ENCODE measurements at regions of chr2 and their contacts with region 1.

Region 1: DNA sequence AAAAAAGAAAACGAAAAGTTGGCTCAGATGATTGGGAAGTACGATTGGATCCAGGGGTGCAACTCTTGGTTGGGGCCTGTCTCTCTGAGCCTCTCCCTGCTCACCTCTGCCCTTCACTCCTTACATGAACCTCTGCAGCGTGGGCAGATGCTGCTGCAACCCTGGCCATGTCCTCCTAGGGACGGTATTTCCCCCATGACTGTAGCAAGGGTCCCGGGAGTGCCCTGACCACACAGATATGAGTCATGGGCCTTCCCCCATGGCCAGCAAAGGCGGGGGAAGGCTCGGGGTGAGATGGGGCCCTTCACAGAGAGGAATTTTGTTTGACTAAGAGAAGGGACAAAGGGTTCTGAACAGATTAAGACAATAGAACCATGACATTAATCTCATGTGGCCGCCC is 129.0 kb downstream of the NCK2 start:
- DNase-seq: peak; percentile 53
- ATAC-seq: peak; percentile 93
- H3K4me3 Mint-ChIP-seq: peak overlapping the region; percentile 59
- H3K27ac Mint-ChIP-seq: peak overlapping the region; percentile 75
- H3K4me1 Mint-ChIP-seq: peaks cover 92% of the 10 kb centered on the region
- H3K27me3 Mint-ChIP-seq: no peaks in the 10 kb centered on the region
- CTCF ChIP-seq: no peak

Region 2: DNA sequence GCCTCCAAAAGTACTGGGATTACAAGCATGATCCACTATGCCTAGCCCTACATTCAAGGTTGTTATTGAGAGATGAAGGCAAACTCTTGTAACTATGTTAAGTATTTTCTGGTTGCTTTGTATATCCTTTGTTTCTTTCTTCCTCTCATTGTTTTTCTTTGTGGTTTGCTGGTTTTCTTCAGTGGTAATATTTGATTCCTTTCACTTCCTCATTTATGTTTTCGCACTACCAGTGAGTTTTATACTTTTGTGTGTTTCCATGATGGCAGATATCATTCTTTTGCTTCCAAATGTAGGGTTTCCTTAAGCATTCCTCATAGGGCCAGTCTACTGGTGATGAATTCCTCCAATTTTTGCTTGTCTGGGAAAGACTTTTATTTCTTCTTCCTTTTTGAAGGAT is 38.8 kb before region 1 on chr2:
- CTCF ChIA-PET with region 1: no interaction called
- POLR2A ChIA-PET with region 1: no interaction called
- intact Hi-C with region 1: loop called (anchors 2 kb)
- DNase-seq: no peak
- ATAC-seq: peak; percentile 72
- H3K4me3 Mint-ChIP-seq: peak overlapping the region; percentile 56
- H3K27ac Mint-ChIP-seq: peak overlapping the region; percentile 82
- H3K4me1 Mint-ChIP-seq: peaks cover 75% of the 10 kb centered on the region
- H3K27me3 Mint-ChIP-seq: no peaks in the 10 kb centered on the region
- CTCF ChIP-seq: no peak

Region 3: GRCh38 chr2:105857076-105857740 is 16.5 kb before region 1 on chr2:
- CTCF ChIA-PET with region 1: no interaction called
- POLR2A ChIA-PET with region 1: no interaction called
- intact Hi-C with region 1: no loop called
- DNase-seq: no peak
- ATAC-seq: no peak
- H3K4me3 Mint-ChIP-seq: no peak overlapping the region
- H3K27ac Mint-ChIP-seq: no peak overlapping the region
- H3K4me1 Mint-ChIP-seq: peaks cover 73% of the 10 kb centered on the region
- H3K27me3 Mint-ChIP-seq: no peaks in the 10 kb centered on the region
- CTCF ChIP-seq: no peak

Region 4: DNA sequence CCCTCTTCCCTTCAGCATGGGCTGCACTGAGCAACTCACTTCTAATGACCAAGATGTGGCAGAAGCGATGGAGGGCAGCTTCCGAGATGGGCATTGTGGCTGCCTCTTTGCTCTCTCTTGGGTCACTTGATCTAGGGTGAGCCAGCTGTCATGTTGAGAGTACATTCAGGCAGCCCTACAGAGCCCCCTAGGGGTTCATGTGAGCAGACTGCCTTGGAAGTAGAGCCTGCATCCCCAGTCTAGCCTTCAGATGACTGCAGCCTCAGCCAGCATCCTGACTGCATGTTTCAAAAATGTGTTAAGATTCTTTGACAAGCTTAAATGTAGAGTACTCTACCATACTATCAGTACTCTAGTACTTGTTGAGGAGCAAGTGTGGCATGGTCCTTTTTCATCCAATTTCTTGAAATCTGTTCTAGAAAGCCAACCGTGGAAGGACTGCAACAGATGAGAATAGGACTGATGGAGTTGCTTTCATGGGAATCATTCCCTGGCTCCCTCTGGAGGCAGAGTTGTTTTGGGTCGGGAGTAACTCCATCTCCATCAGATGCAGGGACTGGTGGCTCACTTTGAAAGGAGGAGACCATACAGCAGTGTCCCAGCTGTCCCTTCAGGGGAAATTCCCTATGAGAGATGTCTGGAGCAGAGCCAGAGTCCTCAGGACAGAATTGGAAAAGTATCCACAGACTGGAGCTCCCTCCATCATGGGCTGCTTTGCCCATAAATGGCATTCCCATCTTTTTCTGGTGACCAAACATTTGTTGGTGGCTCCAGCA is 15.1 kb after region 1 on chr2:
- CTCF ChIA-PET with region 1: no interaction called
- POLR2A ChIA-PET with region 1: interaction called, 4 read pairs
- intact Hi-C with region 1: loop called (anchors 1 kb)
- DNase-seq: no peak
- ATAC-seq: no peak
- H3K4me3 Mint-ChIP-seq: no peak overlapping the region
- H3K27ac Mint-ChIP-seq: no peak overlapping the region
- H3K4me1 Mint-ChIP-seq: peaks cover 49% of the 10 kb centered on the region
- H3K27me3 Mint-ChIP-seq: no peaks in the 10 kb centered on the region
- CTCF ChIP-seq: no peak

Region 5: GRCh38 chr2:105904938-105905337 is 31.2 kb after region 1 on chr2:
- CTCF ChIA-PET with region 1: no interaction called
- POLR2A ChIA-PET with region 1: no interaction called
- intact Hi-C with region 1: loop called (anchors 2 kb)
- DNase-seq: no peak
- ATAC-seq: peak; percentile 86
- H3K4me3 Mint-ChIP-seq: peak overlapping the region; percentile 4
- H3K27ac Mint-ChIP-seq: peak overlapping the region; percentile 1
- H3K4me1 Mint-ChIP-seq: peaks cover 38% of the 10 kb centered on the region
- H3K27me3 Mint-ChIP-seq: no peaks in the 10 kb centered on the region
- CTCF ChIP-seq: no peak